Posterior cingulate gyrus (tissue), 11 donors: ENCODE measurements at regions of chr11 and their contacts with region 1.

Region 1: GRCh38 chr11:3841426-3842350 is 929 bp upstream of the RHOG start:
- DNase-seq: peak; percentile 75 to 97 (median 86)

Region 2: GRCh38 chr11:2675540-2675939 is 1166.1 kb before region 1 on chr11:
- intact Hi-C with region 1: no loop called
- DNase-seq: peak in 4 of 10 donors; percentile 35 to 88 (median 60)

Region 3: DNA sequence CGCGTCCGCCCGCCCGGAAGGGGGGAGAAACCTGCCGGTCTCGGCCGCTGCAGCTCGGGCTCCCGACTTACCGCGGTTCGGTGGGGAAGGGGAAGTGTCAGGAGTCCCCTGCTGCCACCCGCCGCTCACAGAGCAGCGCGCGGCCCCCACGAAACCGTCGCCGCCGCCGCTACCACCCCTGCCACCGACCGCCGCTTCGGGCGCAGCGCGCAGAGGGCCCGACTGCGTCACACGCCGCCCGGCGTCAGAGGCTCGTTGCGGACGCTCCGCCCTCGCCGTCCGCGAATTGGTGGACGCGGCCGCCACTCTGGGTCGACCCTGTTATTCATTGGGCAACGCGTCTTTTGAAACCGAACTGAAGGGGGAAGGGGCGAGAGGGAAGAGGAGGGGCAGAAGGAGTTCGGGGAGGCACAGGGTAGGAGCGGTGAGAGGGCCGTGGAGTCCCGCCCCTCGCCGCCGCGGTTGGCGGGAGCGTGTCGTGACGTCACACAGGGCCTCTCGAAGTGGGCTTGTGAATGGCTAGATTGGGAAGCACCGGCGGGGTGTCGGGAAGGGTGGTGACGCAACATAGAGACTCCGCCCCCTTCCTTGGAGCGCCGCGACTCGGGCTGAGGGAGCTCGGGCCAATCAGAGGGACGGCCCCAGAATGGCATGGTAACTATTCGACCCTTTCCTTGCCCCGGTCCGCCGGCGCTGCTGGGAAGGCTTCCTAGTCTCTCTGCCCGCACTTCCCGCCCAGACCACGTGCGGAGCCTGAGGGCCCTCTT is 44.2 kb before region 1 on chr11 and contains the start of gene NUP98:
- intact Hi-C with region 1: loop called (anchors 2 kb)
- DNase-seq: peak; percentile 99 to 100 (median 99)

Region 4: DNA sequence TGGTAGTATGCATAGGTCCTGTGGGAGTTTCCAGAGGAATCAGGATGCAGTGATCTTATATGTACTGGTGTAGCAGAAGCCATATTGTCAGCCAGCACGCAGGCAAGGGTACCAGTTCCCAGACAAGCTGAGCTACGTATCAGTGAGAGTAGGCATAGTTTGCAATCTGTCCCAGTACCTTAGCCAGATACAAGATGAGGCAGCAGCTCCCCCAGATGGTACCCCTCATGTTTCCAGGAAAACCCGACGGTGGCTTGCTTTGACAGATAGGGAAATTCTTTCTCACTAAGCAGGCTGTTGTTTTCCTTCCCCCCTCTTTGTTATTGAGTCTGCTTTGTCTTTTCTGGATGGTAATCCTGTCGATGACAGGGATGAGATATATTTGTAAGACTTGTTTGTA is 143.2 kb after region 1 on chr11:
- intact Hi-C with region 1: no loop called
- DNase-seq: peak in 2 of 10 donors; percentile 11 to 15